Activated T-helper 1 cell treated with anti-CD3 and anti-CD28 coated beads, Interleukin-12 subunit alpha, Interleukin-12 subunit beta, Interleukin-2, Interleukin-4 antibody, amounts not matched to agents 30 ng/mL and 10 ng/mL and 1 ng/mL, durations not matched to agents 14 hours and 24 hours and 36 hours (primary cell): ENCODE measurements at regions of chr4 and their contacts with region 1.

Region 1: GRCh38 chr4:121950212-121950679 is 1.6 kb downstream of the TRPC3 start:
- DNase-seq: peak; percentile 74
- H3K4me3 Mint-ChIP-seq: peak overlapping the region; percentile 89
- H3K27ac Mint-ChIP-seq: peak overlapping the region; percentile 46
- H3K4me1 Mint-ChIP-seq: peaks cover 26% of the 10 kb centered on the region
- H3K27me3 Mint-ChIP-seq: peaks cover 50% of the 10 kb centered on the region

Region 2: DNA sequence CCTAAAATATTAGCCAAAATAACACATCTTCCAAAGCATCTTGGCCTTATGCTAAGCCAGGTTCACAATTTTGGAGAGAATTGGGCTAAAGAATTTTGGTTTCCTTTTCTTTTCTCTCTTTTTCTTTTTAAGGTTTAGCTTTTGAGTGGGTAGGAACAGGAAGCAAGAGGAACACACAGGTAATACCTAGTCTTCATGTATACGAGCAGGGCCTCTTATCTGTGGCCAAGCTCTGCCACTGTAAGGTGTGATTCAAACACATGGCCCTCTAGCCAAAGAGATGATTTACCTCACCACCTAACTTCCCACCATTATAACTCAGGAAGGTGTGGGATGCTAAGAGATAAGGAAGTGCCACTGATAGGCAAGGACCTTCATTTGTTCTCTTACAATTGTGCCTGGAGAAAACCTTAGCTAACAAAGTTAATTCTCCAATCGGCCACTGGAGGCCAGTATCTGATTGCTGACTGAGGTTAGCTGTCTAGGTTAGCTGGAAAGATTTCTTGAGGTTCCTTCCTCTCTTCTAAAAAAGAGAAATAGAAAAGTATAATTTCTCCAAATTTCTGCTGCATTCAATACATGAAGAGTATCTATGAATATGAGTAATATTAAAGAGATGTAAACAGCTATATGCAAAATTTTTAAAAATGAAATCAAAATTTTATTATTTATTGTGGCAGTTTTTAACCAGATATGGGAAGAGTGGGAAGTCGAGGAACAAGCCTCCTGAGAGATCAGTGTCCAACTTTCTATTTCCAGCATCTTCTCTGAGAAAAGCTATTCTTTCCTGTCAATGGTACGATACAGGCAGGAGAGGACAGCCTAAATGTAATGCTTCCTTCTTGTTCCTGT is 49.9 kb before region 1 on chr4:
- intact Hi-C with region 1: loop called (anchors 2 kb)
- DNase-seq: peak; percentile 24
- H3K4me3 Mint-ChIP-seq: no peak overlapping the region
- H3K27ac Mint-ChIP-seq: no peak overlapping the region
- H3K4me1 Mint-ChIP-seq: peaks cover 6% of the 10 kb centered on the region
- H3K27me3 Mint-ChIP-seq: peaks cover 7% of the 10 kb centered on the region

Region 3: DNA sequence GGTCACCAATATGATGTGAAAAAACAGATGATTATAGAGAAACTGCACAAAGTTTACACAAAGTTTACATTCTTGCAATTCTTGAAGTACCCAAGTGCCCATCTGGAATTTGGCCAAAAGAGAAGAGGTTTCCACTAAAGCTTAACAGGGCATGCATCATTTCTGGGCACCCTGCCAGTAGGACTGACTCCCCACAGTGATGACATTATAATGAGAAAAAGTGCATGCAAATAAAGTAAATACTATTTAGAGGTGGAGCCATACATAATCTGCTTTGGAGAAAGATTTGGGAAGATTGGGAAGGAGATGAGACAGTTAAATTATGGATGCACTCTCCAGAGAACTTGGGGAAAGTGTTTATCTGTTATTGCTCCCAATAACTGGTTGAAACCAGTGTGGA is 95.3 kb after region 1 on chr4:
- intact Hi-C with region 1: no loop called
- DNase-seq: no peak
- H3K4me3 Mint-ChIP-seq: no peak overlapping the region
- H3K27ac Mint-ChIP-seq: no peak overlapping the region
- H3K4me1 Mint-ChIP-seq: no peaks in the 10 kb centered on the region
- H3K27me3 Mint-ChIP-seq: peaks cover 4% of the 10 kb centered on the region

Region 4: DNA sequence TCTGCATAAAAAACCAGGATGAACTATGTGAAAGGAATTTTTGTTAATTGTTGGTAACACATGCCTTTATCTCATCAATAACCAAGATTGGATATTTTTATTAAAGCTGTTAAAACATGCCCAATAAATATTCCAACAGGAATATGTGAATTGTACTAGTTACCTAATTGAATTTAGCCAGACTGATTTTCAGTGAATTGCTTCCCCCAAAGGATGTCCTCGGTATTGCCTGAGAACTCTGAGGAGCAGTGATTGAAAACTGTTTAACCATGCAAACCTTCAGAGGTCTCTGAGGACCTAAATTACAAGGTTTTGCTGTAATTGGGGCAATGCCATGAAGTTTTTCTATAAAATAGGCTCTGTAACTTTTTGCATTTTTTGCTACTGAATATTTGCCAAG is 268.5 kb after region 1 on chr4:
- intact Hi-C with region 1: loop called (anchors 2 kb)
- DNase-seq: no peak
- H3K4me3 Mint-ChIP-seq: no peak overlapping the region
- H3K27ac Mint-ChIP-seq: no peak overlapping the region
- H3K4me1 Mint-ChIP-seq: peaks cover 10% of the 10 kb centered on the region
- H3K27me3 Mint-ChIP-seq: no peaks in the 10 kb centered on the region

Region 5: DNA sequence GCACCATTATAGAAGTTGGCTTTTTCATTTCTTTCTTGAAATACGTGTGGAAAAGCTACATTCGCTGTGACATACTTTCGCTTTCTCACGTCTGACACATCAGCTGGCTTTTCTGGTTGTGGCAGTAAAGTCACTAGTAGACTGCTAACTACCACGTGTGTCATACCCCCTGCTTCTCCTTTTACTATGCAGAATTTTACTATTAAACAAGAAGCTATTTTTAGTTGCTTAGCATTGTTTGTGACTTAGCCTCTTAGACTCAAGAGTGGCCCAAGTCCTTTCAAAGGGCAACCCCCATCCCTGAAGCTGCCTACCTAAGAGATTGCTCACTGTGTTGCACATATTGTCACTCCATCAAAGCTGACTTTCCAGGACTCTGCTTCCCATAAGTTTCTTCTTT is 508.4 kb after region 1 on chr4:
- intact Hi-C with region 1: loop called (anchors 2 kb)
- DNase-seq: peak; percentile 29
- H3K4me3 Mint-ChIP-seq: peak overlapping the region; percentile 76
- H3K27ac Mint-ChIP-seq: peak overlapping the region; percentile 87
- H3K4me1 Mint-ChIP-seq: peaks cover 46% of the 10 kb centered on the region
- H3K27me3 Mint-ChIP-seq: no peaks in the 10 kb centered on the region

Region 6: GRCh38 chr4:122716825-122717448 is 766.7 kb after region 1 on chr4:
- intact Hi-C with region 1: loop called (anchors 10 kb)
- DNase-seq: peak; percentile 55
- H3K4me3 Mint-ChIP-seq: peak overlapping the region; percentile 25
- H3K27ac Mint-ChIP-seq: peak overlapping the region; percentile 81
- H3K4me1 Mint-ChIP-seq: peaks cover 46% of the 10 kb centered on the region
- H3K27me3 Mint-ChIP-seq: peaks cover 2% of the 10 kb centered on the region